Endothelial cell of umbilical vein (primary cell): ENCODE measurements at regions of chr3 and their contacts with region 1.

Region 1: GRCh38 chr3:196287440-196288148 is at the start of gene PCYT1A:
- DNase-seq: peak; percentile 94
- H3K4me3 ChIP-seq: peak within 1 kb of the TSS; percentile 27 to 96 (median 75)
- H3K27ac ChIP-seq: peak within 1 kb of the TSS; percentile 43
- H3K4me1 ChIP-seq: peaks cover 11% of the 10 kb centered on the region
- H3K27me3 ChIP-seq: no peaks in the 10 kb centered on the region
- CTCF ChIP-seq: no peak
- POLR2A ChIP-seq: peak; percentile 86
- total RNA-seq, gene PCYT1A: 65.5 and 75.4 TPM in 2 replicates

Region 2: GRCh38 chr3:196317687-196318467 is 30.3 kb after region 1 on chr3 and contains the start of gene DYNLT2B:
- CTCF ChIA-PET with region 1: no interaction called
- POLR2A ChIA-PET with region 1: no interaction called
- dilution Hi-C with region 1: no loop called
- intact Hi-C with region 1: loop called (anchors 1 kb)
- DNase-seq: peak; percentile 94
- H3K4me3 ChIP-seq: peak within 1 kb of the TSS; percentile 48 to 96 (median 53)
- H3K27ac ChIP-seq: peak within 1 kb of the TSS; percentile 51
- H3K4me1 ChIP-seq: peaks cover 5% of the 10 kb centered on the region
- H3K27me3 ChIP-seq: no peaks in the 10 kb centered on the region
- CTCF ChIP-seq: no peak
- POLR2A ChIP-seq: peak; percentile 96
- total RNA-seq, gene DYNLT2B: 13.9 and 14.4 TPM in 2 replicates

Region 3: DNA sequence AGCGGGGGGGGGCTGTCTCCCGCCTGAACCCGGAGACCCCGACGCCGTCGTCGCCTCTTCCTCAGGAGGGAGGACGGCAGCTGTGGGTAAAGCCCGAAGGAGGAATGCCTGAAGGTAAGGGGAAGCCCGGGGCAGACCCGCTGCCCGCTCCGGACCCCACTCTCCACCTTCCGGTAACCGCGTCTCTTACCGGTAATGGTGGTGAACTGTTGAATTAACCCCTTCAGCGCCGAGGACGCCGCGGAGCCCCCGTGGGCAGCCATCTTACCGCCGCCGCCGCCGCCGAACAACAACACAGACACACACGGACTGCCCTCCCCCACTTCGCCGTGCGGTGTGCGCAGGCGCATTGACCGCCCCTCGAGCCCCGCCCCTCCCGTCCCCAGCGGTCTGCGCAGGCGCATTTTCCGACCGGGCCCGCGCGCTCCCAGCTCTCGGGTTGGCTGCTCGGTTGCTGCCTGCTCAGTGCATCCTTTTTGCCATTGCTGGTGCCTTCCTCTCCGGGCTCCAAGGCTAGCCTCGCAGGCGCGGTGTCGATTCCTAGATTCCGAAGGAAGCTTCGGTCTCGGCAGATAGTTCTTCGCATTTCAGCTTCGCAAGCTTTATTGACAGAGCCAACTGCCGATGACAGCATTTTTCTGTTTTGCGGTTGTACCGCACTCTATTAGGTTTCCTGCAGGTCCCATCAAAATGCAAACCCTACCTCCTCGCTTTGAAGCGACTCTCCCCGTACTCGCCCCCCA is 144.7 kb after region 1 on chr3 and contains the start of gene UBXN7:
- CTCF ChIA-PET with region 1: no interaction called
- POLR2A ChIA-PET with region 1: interaction called, 3 read pairs
- dilution Hi-C with region 1: no loop called
- intact Hi-C with region 1: loop called (anchors 1 kb)
- DNase-seq: peak; percentile 97
- H3K4me3 ChIP-seq: peak within 1 kb of the TSS; percentile 65 to 87 (median 74)
- H3K27ac ChIP-seq: peak within 1 kb of the TSS; percentile 41
- H3K4me1 ChIP-seq: peaks cover 8% of the 10 kb centered on the region
- H3K27me3 ChIP-seq: no peaks in the 10 kb centered on the region
- CTCF ChIP-seq: no peak
- POLR2A ChIP-seq: peak; percentile 85
- total RNA-seq, gene UBXN7: 55.1 and 57.0 TPM in 2 replicates